Panc1 (cell line): ENCODE measurements at regions of chr16 and their contacts with region 1.

Region 1: GRCh38 chr16:14337303-14338191 is 266.4 kb downstream of the MRTFB start:
- DNase-seq: no peak
- ATAC-seq: peak; percentile 57
- H3K4me3 ChIP-seq: no peak overlapping the region
- H3K27ac ChIP-seq: no peak overlapping the region
- H3K4me1 ChIP-seq: no peaks in the 10 kb centered on the region
- H3K27me3 ChIP-seq: no peaks in the 10 kb centered on the region
- CTCF ChIP-seq: no peak

Region 2: GRCh38 chr16:13510425-13511151 is 827.0 kb before region 1 on chr16:
- CTCF ChIA-PET with region 1: no interaction called
- POLR2A ChIA-PET with region 1: no interaction called
- in situ Hi-C with region 1: no loop called
- intact Hi-C with region 1: no loop called
- DNase-seq: no peak
- ATAC-seq: no peak
- H3K4me3 ChIP-seq: no peak overlapping the region
- H3K27ac ChIP-seq: no peak overlapping the region
- H3K4me1 ChIP-seq: no peaks in the 10 kb centered on the region
- H3K27me3 ChIP-seq: no peaks in the 10 kb centered on the region
- CTCF ChIP-seq: peak; percentile 43; the same call in 1 of the 2 replicates

Region 3: DNA sequence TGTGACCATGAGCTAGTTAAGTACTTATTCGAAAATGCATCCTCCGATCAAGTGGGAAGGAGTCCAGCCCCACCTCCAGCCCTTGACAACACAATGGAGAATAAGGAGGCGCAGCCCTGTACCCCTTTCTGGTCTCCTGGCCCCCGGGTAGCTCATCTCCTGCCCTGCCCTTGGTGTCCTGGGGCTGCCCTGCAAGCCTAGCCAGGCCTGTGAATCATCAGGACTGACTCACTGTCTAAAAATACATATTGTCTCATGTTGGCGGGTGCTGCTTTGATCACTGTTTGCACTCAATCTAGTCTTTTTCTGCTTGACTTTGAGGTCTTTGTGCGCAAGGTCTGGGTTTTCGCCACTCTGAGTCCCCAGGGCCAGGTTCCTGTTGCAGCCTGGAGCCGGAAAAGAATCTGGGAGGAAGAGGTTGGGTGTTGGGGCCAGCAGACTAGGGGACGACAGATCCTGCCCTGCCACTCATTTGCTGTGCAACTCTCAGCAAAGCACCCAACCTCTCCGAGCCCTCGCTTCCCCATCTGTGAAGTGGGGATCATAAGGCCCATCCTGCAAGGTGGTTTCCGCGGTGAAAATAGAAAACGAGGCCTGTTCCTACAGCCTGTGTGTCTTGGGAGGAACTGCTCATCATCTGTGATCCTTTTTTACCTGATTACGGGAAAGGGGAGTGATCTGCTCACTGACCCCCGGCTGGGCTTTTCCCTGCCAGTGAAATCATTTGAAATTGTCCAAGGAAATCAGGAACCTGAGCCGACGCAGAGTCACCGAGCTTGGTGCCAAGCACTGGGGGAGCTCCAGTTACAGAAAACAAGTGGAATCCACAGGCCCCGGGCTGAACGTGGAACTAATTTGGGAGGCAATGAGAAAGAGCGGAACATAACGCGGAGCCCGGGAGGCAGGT is 62.1 kb after region 1 on chr16:
- CTCF ChIA-PET with region 1: interaction called, 4 read pairs
- POLR2A ChIA-PET with region 1: no interaction called
- in situ Hi-C with region 1: no loop called
- intact Hi-C with region 1: loop called (anchors 2 kb)
- DNase-seq: peak; percentile 68
- ATAC-seq: peak; percentile 91
- H3K4me3 ChIP-seq: no peak overlapping the region
- H3K27ac ChIP-seq: peak overlapping the region; percentile 29
- H3K4me1 ChIP-seq: peaks cover 13% of the 10 kb centered on the region
- H3K27me3 ChIP-seq: no peaks in the 10 kb centered on the region
- CTCF ChIP-seq: no peak